ENCODE measurements at regions of chr3 and their contacts with region 1.

Region 1: DNA sequence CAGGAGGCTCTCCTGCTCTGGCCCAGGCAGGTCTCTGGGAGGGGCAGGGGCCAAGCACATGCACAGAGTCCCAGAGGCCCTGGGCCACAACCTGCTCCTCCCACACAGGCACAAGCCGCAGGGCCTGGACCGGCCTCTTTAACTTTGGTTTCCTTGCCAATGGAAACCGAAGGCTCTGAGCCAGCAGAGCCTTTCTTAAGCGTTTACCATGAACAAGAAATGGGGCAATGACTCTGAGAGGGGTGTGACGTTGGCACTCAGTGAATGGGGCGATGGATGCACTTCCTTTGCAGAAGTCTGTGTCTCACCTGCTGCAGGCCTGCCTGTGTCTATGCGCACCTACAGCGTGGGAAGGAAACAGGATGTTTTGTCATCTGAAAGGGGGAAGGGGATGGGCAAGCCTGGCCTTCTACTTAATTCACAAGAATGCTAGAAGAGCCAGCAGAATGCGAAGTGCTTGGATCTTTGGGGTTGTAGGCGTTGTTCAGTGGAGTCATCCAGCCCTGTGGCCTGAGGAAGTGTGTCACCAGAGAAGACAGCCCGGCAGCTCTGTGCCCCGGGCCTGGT is 41.8 kb downstream of the IFT122 start:
- DNase-seq: no peak
- CTCF ChIP-seq: no peak

Region 2: DNA sequence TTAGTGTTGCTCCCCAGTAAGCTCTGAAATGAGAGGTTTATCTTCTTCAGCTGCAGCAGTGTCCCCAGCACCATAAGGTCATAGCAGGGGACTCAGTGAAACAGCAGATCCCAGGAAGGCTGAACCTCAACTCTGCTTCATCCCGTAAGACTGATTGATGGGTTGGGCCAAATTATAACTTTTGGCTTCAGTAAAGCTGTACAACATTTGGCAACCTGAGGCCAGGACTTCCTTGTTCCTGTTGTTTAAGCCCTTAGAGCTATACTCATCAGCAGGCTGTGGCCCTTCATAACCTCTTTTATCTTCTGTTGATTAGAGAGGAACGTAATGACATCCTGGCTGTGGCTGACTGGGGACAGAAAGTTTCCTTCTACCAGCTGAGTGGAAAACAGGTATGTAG is 12.8 kb before region 1 on chr3:
- CTCF ChIA-PET with region 1: interaction called, 10 read pairs
- POLR2A ChIA-PET with region 1: interaction called, 3 read pairs
- DNase-seq: no peak
- CTCF ChIP-seq: no peak

Region 3: DNA sequence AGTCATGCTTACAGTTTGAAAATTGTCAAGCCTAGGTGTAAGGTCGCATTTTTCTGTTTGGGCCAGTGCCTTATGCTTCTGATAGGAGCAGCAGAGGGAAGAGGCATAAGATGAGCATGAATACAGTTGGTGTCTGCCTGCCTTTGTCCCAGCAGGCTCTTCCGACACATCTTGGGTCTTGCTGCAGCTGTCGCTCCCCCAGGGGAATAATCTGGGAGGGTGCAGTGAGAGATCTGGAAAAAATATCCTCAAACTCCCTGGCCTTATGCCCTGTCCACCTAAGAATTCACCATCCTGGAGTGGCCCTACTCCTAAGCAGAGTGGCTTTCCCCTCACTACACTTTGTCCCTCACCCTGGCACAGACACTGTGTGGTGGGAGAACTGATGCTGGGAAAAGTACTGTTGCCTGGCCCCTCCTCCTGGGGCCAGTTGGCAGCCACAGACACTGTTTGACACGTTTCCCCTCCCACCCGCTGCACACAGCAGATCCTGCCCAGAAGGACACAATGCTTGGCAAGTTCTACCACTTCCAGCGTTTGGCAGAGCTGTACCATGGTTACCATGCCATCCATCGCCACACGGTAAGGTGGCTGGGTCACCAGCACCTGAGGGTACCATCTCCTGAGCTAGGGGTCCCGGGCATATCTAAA is 25.5 kb after region 1 on chr3:
- CTCF ChIA-PET with region 1: no interaction called
- POLR2A ChIA-PET with region 1: no interaction called
- DNase-seq: no peak
- CTCF ChIP-seq: no peak